ENCODE measurements at regions of chr17 and their contacts with region 1.

Region 1: GRCh38 chr17:36629252-36629847 is 28.0 kb downstream of the MRM1 start:
- DNase-seq: peak; percentile 38 to 91
- H3K4me3 ChIP-seq: no peak overlapping the region
- H3K4me1 ChIP-seq: no peaks in the 10 kb centered on the region
- H3K27me3 ChIP-seq: no peaks in the 10 kb centered on the region

Region 2: DNA sequence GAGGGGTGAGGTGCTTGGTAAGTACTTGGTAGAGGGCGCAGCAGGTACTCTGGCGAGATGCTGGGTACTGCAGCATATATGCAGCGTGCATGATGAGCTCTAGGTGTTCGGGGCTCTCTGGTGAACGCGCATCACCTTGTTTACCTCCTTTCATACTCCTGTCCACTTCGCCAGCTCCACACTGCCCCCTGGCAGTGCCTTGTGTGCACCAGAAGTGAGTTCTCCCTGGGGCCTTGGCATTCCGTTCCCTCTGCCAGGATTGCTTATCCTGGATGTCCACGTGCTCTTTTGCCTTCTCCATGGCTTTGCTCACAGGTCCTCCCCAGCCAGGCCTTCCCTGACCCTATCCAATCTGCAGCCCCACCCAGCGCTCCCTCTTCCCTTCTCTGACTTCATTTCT is 126.2 kb after region 1 on chr17:
- in situ Hi-C with region 1: loop called (anchors 25 kb)
- DNase-seq: peak; percentile 50 to 78
- H3K4me3 ChIP-seq: no peak overlapping the region
- H3K4me1 ChIP-seq: no peaks in the 10 kb centered on the region
- H3K27me3 ChIP-seq: no peaks in the 10 kb centered on the region

Region 3: GRCh38 chr17:37047631-37048104 is 418.3 kb after region 1 on chr17:
- in situ Hi-C with region 1: loop called (anchors 5 kb)
- DNase-seq: peak; percentile 79 to 91
- H3K4me3 ChIP-seq: no peak overlapping the region
- H3K4me1 ChIP-seq: peaks cover 20% of the 10 kb centered on the region
- H3K27me3 ChIP-seq: no peaks in the 10 kb centered on the region

Region 4: GRCh38 chr17:37174205-37174604 is 544.9 kb after region 1 on chr17:
- in situ Hi-C with region 1: loop called (anchors 10 kb)
- DNase-seq: peak; percentile 62 to 76
- H3K4me3 ChIP-seq: no peak overlapping the region
- H3K4me1 ChIP-seq: peaks cover 40% of the 10 kb centered on the region
- H3K27me3 ChIP-seq: no peaks in the 10 kb centered on the region